ENCODE measurements at regions of chr12 and their contacts with region 1.

Region 1: GRCh38 chr12:4107436-4107878 is 166.1 kb upstream of the CCND2 start:
- H3K4me3 ChIP-seq: no peak overlapping the region
- H3K27ac ChIP-seq: no peak overlapping the region
- H3K4me1 ChIP-seq: no peaks in the 10 kb centered on the region
- CTCF ChIP-seq: no peak

Region 2: DNA sequence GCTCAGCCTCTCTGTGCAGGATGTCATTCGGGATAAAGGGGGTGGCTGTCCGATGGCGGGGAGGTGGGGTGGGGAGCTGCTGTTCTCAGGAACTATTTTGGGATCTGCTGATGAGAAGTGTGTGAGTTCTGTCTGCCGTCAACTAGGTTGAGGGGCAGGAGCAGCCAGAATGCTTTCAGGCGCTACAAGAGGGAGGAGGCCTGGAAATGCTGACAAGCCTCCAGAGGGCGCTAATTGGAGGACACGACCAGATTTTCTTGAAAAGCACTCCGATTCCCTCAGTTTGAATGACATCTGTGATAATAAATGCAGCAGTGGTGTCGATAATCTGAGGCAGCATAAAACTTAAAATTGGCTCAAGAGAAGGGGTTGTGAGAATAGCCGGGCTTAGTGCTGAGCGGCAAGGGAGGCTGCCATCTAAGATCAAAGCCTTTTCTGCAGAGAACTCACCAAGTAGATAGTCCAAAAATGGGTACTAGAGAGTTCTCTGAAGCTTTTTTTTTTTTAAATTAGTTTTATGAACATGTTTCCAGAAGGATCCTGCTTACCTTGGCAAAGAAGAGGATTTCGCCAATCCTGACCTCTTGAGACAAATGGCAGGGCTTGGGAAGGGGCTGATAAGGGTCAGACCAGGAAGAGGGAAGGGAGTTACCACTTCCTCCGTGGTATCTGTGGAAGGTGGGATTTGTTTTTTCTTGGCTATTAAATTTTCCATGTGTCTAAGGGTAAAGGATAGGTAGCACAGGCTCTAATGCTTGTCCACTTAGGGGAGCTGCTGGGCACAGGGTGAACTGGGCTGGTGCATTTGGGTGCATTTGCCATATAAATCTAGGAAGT is 448.9 kb before region 1 on chr12:
- CTCF ChIA-PET with region 1: no interaction called
- POLR2A ChIA-PET with region 1: no interaction called
- H3K4me3 ChIP-seq: no peak overlapping the region
- H3K27ac ChIP-seq: no peak overlapping the region
- H3K4me1 ChIP-seq: no peaks in the 10 kb centered on the region
- CTCF ChIP-seq: no peak

Region 3: DNA sequence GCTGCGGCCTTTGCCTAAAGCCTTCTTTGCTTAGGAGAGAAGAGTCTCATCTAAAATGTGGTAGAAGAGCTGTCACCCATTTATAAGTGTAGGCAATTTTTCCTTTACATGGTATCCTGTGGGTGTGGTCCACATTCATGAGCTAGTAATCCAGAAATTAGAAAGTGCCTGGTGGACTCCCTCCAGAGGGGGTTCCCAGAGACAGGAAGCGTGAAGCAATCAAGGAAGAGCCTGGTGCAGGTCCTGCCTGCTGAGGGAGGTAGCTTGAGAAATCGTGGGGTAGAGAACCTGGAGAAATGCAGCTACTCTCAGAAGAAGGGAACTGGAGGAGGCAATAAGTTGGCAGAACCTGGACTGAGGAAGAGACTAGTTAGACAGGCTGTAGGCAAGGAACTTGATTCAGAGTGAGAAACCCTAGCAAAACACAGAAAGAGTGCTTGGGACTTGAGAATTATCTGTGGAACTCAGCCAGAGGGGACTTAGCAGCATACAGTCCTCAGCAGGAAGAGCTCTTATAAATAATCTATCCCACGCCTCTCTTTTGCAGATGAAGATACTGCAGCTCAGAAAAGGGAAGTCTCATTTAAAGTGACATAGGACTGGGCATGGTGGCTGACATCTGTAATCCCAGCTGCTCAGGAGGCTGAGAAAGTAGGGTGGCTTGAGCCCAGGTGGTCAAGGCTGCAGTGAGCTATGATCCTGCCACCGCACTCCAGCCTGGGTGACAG is 16.3 kb before region 1 on chr12:
- CTCF ChIA-PET with region 1: interaction called, 13 read pairs
- POLR2A ChIA-PET with region 1: no interaction called
- H3K4me3 ChIP-seq: no peak overlapping the region
- H3K27ac ChIP-seq: no peak overlapping the region
- H3K4me1 ChIP-seq: no peaks in the 10 kb centered on the region
- CTCF ChIP-seq: no peak

Region 4: DNA sequence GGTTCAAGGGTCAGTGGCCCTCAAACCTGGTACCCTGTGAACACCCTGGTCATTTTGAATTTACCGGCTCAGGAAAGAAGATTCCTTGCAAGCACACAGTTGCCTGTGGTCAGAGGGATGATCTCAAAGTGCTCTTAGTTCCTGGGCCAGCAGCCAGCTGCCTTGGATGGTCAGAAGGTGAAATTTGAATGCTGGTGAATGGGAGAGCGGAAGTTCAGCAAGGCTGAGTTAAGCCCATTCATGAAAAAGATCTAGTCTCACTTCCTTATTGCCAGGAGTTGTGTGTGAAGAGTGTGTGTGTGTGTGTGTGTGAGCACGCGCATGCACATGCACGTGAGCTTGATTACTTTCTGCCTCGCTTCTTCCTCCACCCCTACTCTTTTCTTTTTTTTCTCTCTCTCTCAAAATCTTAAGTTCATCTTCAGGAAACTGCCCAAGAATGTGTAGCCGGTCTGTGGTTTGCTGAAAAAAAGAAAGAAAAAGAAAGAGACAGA is 10.6 kb after region 1 on chr12:
- CTCF ChIA-PET with region 1: interaction called, 14 read pairs
- POLR2A ChIA-PET with region 1: no interaction called
- H3K4me3 ChIP-seq: no peak overlapping the region
- H3K27ac ChIP-seq: no peak overlapping the region
- H3K4me1 ChIP-seq: no peaks in the 10 kb centered on the region
- CTCF ChIP-seq: no peak

Measured in HEK293 (cell line).